Astrocyte of the cerebellum (primary cell): ENCODE measurements at regions of chr2 and their contacts with region 1.

Region 1: GRCh38 chr2:23679044-23679443 is 247.9 kb downstream of the ATAD2B start:
- DNase-seq: no peak
- H3K4me3 ChIP-seq: no peak overlapping the region
- CTCF ChIP-seq: no peak

Region 2: GRCh38 chr2:23636426-23636825 is 42.6 kb before region 1 on chr2:
- in situ Hi-C with region 1: loop called (anchors 5 kb)
- DNase-seq: no peak
- H3K4me3 ChIP-seq: no peak overlapping the region
- CTCF ChIP-seq: peak; percentile 20

Region 3: DNA sequence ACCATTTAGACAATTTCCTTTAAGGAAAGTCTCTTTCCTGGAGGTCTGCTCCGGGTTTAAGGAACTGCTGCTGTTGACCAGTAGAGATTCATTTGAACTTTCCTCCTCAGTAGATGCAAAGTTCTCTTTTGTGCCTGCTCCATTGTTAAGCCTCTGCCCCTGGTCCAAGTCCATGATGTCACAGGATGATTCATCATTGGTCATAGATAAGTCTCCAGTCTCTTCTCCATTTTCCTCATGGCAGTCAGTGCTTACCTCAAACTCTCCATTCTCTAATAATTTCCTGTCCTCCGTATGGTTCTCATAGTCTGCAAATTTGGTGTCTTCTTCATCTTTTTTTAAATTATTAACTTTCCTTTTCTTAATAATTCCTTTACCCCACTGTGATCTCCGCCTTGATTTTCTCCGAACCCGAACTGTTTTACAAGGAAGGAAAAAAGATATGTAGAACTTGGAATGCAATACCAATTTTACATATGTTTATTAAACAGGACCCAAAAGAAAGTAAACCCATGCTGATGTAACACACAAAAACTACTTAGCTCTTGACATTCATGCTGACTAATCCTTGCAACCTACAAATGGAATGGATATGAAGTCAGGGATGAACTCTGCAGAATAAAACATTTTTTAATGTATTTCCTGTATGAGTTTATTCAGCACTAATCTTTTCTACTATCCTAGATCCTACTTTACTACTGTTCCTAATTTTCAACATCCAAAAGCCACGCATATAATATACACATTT is 78.8 kb after region 1 on chr2:
- in situ Hi-C with region 1: loop called (anchors 5 kb)
- DNase-seq: peak; percentile 52
- H3K4me3 ChIP-seq: no peak overlapping the region
- CTCF ChIP-seq: no peak

Region 4: GRCh38 chr2:24721470-24721869 is 1042.4 kb after region 1 on chr2:
- in situ Hi-C with region 1: no loop called
- DNase-seq: peak; percentile 82
- H3K4me3 ChIP-seq: no peak overlapping the region
- CTCF ChIP-seq: peak; percentile 2